ENCODE measurements at regions of chr17 and their contacts with region 1.

Region 1: DNA sequence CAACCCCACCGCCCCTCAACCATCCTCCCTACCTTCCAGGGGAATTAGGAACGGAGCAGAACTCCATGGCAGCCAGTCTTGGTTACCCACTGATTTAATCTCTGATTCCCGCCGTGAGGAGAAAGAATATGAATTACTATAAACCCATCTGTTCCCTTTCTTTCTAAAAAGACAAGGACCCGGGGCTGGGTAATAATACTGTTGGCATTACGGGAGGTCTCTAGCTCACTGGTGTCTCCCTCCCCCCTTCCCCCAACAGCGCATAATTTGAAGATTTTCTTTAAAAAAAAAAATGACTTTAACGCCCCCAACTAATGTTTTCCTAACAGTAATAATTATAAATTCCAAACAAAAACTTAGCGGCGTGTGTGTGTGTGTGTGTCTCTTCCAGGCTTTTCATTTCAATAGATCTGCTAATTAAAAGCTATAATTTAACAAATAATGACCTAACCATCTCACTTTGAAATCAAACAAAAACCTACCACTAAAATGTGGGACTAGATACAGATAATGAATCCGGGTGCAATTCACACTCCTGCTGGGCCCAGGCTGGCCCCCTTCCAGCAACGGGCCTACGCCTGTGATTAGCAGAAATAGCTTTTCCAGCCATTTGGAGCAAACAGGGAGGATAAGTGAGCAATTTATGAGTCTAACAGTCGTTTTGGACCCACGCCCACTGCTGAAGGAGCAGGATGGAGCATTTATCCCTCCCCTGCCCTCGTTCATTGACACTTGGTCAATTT is 18.2 kb upstream of the BHLHA9 start:
- DNase-seq: peak in 2 of 4 donors; percentile 37 to 43
- ATAC-seq: no peak
- H3K4me3 ChIP-seq: no peak overlapping the region
- H3K27ac ChIP-seq: no peak overlapping the region
- H3K4me1 ChIP-seq: peaks cover 7% of the 10 kb centered on the region
- H3K27me3 ChIP-seq: no peaks in the 10 kb centered on the region
- CTCF ChIP-seq: no peak
- POLR2A ChIP-seq: no peak

Region 2: DNA sequence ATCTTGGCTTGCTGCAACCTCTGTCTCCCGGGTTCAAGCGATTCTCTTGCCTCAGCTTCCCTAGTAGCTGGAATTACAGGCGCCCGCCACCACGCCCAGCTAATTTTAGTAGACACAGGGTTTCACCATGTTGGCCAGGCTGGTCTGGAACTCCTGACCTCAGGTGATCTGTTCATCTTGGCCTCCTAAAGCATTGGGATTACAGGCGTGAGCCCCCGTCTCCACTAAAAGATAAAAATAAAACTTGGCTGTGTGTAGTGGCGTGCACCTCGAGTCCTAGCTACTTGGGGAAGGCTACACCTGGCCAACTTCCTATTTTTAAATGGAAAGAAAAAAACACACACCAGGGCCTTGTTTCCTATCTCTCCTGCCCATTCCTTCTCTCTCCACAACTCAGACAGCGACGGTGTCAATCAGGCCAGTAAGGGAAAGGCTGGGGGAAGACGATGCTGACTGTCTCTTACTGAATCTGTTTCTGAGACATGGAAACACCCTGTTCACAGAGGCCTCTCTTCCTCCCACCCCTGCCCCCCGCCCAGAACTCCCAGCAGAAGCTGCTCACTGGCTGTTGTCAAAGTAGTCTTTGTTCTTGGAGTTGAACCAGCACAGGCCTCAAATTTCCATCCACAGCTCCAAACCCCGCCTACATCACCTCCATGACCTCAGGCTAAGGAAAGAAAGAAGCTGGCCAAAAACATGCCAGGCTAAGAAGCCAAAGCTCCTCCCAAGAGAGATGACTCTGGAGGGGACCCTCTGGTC is 369.0 kb before region 1 on chr17:
- intact Hi-C with region 1: no loop called
- DNase-seq: peak; percentile 80 to 94 (median 88)
- ATAC-seq: peak; percentile 74
- H3K4me3 ChIP-seq: no peak overlapping the region
- H3K27ac ChIP-seq: peak overlapping the region; percentile 85 to 88 (median 86)
- H3K4me1 ChIP-seq: peaks cover 80% of the 10 kb centered on the region
- H3K27me3 ChIP-seq: no peaks in the 10 kb centered on the region
- CTCF ChIP-seq: no peak
- POLR2A ChIP-seq: peak in 2 of 3 donors; percentile 40 to 44

Region 3: DNA sequence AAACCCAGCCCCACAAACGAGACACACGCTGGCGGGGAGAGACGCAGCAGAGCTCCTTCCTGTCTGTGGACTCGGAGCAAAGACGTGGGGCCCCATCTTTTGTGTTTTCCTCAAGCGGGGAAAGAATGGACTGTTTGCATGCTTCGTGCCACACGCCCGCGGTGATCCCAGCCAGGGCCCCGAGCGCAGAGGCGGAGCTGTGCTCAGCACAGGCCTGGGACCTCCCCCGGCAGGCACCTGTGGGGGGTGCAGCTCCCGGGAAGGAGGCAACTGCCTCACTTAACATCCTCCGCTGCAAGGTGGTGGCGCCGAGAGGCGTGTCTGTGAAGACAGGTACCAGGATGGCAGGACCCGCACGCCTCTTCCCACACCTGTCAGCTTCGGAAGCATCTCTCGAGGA is 46.6 kb after region 1 on chr17:
- intact Hi-C with region 1: no loop called
- DNase-seq: peak in 1 of 4 donors; percentile 22
- ATAC-seq: peak; percentile 45
- H3K4me3 ChIP-seq: no peak overlapping the region
- H3K27ac ChIP-seq: no peak overlapping the region
- H3K4me1 ChIP-seq: peaks cover 8% of the 10 kb centered on the region
- H3K27me3 ChIP-seq: peaks cover 0 to 8% of the 10 kb centered on the region in 2 donors
- CTCF ChIP-seq: no peak
- POLR2A ChIP-seq: no peak

Region 4: GRCh38 chr17:1331708-1332107 is 79.7 kb after region 1 on chr17:
- intact Hi-C with region 1: loop called (anchors 10 kb)
- DNase-seq: no peak
- ATAC-seq: no peak
- H3K4me3 ChIP-seq: no peak overlapping the region
- H3K27ac ChIP-seq: no peak overlapping the region
- H3K4me1 ChIP-seq: no peaks in the 10 kb centered on the region
- H3K27me3 ChIP-seq: no peaks in the 10 kb centered on the region
- CTCF ChIP-seq: no peak
- POLR2A ChIP-seq: no peak

Region 5: GRCh38 chr17:1673041-1673785 is 421.2 kb after region 1 on chr17:
- intact Hi-C with region 1: no loop called
- DNase-seq: no peak
- ATAC-seq: no peak
- H3K4me3 ChIP-seq: no peak overlapping the region
- H3K27ac ChIP-seq: no peak overlapping the region
- H3K4me1 ChIP-seq: no peaks in the 10 kb centered on the region
- H3K27me3 ChIP-seq: no peaks in the 10 kb centered on the region
- CTCF ChIP-seq: no peak
- POLR2A ChIP-seq: no peak

Measured in body of pancreas (tissue), 4 donors.